ENCODE measurements at regions of chr2 and their contacts with region 1.

Region 1: DNA sequence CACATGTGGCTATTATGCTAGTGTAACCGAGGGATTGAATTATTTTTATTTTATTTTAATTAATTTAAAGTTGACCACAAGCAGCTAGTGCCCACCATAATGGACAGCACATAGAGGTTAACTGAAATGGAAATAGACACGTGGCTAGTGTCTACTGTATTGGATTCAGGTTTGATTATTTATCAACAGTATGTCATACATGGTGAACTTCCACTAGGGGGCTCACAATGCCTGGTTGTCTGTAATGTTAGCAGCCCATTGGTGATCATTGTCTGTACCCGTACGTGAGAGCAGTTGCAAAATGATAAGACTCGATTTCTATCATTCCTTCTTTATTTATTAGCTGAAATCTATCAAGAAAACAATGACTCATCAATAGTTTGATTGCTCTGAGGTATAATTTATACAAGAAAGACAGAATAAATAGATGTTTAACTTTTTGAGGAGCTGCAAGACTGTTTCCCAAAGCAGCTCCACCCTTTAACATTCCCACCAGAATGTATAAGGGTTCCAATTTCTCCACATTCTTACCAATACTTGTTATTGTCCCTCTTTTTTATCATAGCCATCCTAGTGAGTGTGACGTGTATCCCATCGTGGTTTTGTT is 76.5 kb downstream of the CYBRD1 start:
- DNase-seq: peak; percentile 51
- H3K4me3 ChIP-seq: no peak overlapping the region
- H3K27ac ChIP-seq: no peak overlapping the region
- H3K4me1 ChIP-seq: peaks cover 21% of the 10 kb centered on the region
- H3K27me3 ChIP-seq: no peaks in the 10 kb centered on the region
- CTCF ChIP-seq: peak; percentile 85 to 92

Region 2: DNA sequence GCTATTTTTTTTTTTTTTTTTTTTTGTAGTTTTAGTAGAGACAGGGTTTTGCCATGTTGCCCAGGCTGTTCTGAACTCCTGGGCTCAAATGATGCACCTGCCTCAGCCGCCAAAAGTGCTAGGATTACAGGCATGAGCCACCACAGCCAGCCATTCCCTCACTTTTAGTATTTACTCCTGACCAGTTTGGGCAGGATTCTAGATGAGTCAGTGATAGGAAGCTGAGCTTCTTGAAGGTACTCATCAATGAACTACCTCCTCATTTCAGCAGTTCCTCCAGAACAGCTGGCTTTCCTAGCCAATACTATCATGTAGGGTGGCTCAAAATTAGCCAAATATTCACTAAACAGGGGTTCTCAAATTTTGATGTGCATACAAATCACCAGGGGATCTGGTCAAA is 19.3 kb before region 1 on chr2:
- CTCF ChIA-PET with region 1: interaction called, 10 read pairs
- dilution Hi-C with region 1: no loop called
- in situ Hi-C with region 1: no loop called
- intact Hi-C with region 1: no loop called
- DNase-seq: peak; percentile 74
- H3K4me3 ChIP-seq: no peak overlapping the region
- H3K27ac ChIP-seq: no peak overlapping the region
- H3K4me1 ChIP-seq: peaks cover 3% of the 10 kb centered on the region
- H3K27me3 ChIP-seq: no peaks in the 10 kb centered on the region
- CTCF ChIP-seq: no peak

Region 3: GRCh38 chr2:171687287-171688128 is 88.7 kb after region 1 on chr2 and contains the start of gene DYNC1I2:
- CTCF ChIA-PET with region 1: interaction called, 3 read pairs
- dilution Hi-C with region 1: no loop called
- in situ Hi-C with region 1: no loop called
- intact Hi-C with region 1: loop called (anchors 1 kb)
- DNase-seq: peak; percentile 94
- H3K4me3 ChIP-seq: peak within 1 kb of the TSS; percentile 69 to 82 (median 71)
- H3K27ac ChIP-seq: peak within 1 kb of the TSS; percentile 86
- H3K4me1 ChIP-seq: no peaks in the 10 kb centered on the region
- H3K27me3 ChIP-seq: no peaks in the 10 kb centered on the region
- CTCF ChIP-seq: no peak
- total RNA-seq, gene DYNC1I2: 97.4 to 119 TPM

Region 4: DNA sequence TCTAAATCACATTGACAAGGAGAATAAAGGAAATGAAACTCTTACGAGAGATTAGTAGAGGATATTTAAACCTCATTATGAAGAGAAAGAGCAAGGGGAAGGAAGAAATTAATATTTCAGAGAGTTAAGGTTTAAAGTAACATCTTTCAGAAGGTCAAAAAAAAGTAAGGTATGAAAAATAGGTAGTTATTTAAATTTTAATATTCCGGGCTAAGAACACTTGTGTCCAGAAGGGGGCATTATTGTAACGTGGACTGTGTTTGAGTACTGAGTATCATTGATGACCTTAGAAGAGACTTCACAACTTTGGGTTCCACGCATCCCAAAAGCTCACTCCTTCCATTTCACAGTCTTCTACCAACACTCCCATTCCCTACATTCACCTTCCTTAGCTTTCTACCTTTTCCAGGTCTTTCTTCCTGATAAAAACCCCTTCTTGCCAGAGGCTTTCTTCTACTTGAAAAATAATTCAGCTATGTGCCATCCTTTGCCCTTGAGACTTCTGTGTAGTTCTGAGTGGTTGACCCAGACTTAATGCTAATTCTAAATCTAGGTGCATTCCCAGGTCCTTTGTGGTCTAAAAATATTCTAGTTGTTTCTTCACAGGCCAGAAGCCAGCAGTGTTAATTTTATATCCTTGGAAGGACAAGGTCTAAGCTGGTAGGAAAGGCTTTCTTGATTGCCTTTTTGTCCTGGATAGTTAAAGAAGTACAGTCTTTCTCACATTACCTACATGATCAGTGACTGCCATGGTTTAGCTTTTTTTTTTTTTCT is 104.9 kb after region 1 on chr2:
- CTCF ChIA-PET with region 1: no interaction called
- dilution Hi-C with region 1: no loop called
- in situ Hi-C with region 1: loop called in 1 of 2 experiments (anchors 10 kb)
- intact Hi-C with region 1: loop called (anchors 2 kb)
- DNase-seq: peak; percentile 23
- H3K4me3 ChIP-seq: no peak overlapping the region
- H3K27ac ChIP-seq: no peak overlapping the region
- H3K4me1 ChIP-seq: peaks cover 9% of the 10 kb centered on the region
- H3K27me3 ChIP-seq: no peaks in the 10 kb centered on the region
- CTCF ChIP-seq: peak; percentile 41 to 54

Region 5: GRCh38 chr2:171726847-171727450 is 128.1 kb after region 1 on chr2:
- CTCF ChIA-PET with region 1: no interaction called
- dilution Hi-C with region 1: no loop called
- in situ Hi-C with region 1: no loop called
- intact Hi-C with region 1: no loop called
- DNase-seq: no peak
- H3K4me3 ChIP-seq: no peak overlapping the region
- H3K27ac ChIP-seq: no peak overlapping the region
- H3K4me1 ChIP-seq: no peaks in the 10 kb centered on the region
- H3K27me3 ChIP-seq: no peaks in the 10 kb centered on the region
- CTCF ChIP-seq: no peak

Region 6: DNA sequence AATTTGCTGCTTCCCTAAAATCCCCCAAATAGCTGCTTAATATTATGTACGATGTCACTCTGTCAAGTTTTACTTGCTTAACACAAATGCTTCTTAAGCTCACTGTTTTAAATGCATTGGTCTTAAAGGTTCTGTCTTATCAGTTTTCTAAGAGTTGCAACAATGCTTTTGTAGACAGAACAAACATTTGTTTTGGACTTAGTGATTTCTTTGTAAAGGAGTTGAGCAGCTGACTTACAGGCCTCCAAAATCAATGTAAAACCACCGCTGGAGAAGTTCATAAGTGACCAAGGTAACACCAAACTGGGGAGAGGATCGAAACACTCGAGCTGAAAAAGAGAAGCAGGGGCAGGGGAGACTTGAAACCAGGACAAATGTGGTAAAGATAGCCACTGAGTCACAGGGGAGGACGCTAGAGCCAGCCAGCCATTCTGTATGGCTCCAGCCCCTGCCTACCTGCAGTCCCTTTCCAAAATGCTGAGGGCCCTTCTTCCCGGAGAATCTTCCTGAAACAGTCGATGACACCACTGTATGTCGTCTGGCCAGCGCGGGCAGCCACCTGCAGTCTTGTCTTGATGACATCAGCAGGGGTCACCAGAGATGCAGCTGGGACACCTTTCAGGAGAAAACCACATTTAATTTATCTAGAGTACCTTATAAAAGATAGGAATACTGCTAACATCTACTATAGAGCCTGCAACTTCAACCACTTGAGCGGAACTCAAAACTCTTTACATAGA is 188.7 kb after region 1 on chr2:
- CTCF ChIA-PET with region 1: no interaction called
- dilution Hi-C with region 1: no loop called
- in situ Hi-C with region 1: no loop called
- intact Hi-C with region 1: no loop called
- DNase-seq: no peak
- H3K4me3 ChIP-seq: no peak overlapping the region
- H3K27ac ChIP-seq: no peak overlapping the region
- H3K4me1 ChIP-seq: no peaks in the 10 kb centered on the region
- H3K27me3 ChIP-seq: no peaks in the 10 kb centered on the region
- CTCF ChIP-seq: no peak

Region 7: GRCh38 chr2:171811245-171811628 is 212.4 kb after region 1 on chr2:
- CTCF ChIA-PET with region 1: no interaction called
- dilution Hi-C with region 1: no loop called
- in situ Hi-C with region 1: no loop called
- intact Hi-C with region 1: loop called (anchors 5 kb)
- DNase-seq: peak; percentile 20
- H3K4me3 ChIP-seq: no peak overlapping the region
- H3K27ac ChIP-seq: no peak overlapping the region
- H3K4me1 ChIP-seq: peaks cover 15% of the 10 kb centered on the region
- H3K27me3 ChIP-seq: no peaks in the 10 kb centered on the region
- CTCF ChIP-seq: peak; percentile 32 to 46

Region 8: GRCh38 chr2:172147944-172148650 is 549.3 kb after region 1 on chr2:
- CTCF ChIA-PET with region 1: no interaction called
- dilution Hi-C with region 1: no loop called
- in situ Hi-C with region 1: loop called in 1 of 2 experiments (anchors 25 kb)
- intact Hi-C with region 1: no loop called
- DNase-seq: peak; percentile 67
- H3K4me3 ChIP-seq: no peak overlapping the region
- H3K27ac ChIP-seq: no peak overlapping the region
- H3K4me1 ChIP-seq: peaks cover 9% of the 10 kb centered on the region
- H3K27me3 ChIP-seq: no peaks in the 10 kb centered on the region
- CTCF ChIP-seq: no peak